ENCODE measurements at regions of chr1 and their contacts with region 1.

Region 1: DNA sequence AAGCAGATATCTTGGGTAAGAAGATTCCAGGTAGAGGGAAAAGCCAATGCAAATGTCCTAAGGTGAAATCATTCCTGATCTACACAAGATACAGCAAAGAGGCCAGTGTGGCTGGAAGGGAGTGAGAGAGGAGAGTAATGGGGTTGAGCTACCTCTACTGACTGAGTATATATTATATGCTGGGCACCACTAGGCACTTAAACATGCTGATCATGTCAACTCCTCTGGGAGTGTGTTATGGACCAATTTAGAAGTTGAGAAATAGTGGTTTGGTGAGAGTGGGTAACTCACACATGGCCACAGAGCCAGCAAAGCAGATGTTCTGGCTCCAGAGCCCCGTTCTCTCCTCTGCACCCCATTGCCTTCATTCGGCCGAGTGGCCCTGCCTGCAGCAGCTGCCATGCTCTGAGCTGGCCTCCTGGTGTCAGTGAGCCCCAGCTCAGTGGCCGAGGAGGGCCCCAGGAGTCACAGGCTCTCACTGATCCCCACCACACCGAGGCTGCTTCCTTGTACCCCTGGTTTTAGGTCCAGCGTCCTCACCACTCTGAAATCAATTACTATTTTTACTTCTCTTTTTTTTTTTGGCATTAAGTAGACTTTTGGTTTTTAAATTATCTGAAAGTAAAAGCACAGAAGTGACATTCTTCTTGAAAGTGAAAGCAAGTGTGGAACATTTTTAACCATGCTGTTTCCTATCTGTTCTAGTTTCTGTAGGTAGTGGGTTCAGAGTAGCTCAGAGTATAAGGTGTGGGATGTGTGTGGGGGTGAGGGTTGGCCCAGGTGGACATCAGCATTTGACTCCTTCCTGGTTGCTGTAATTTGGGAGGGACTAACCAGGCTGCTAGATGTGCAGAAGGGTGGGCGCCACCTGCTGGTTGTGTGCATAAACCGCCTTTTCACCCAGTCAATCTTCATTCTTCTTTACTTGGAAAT is 45.8 kb upstream of the CRNN start:
- DNase-seq: peak; percentile 48
- H3K4me3 ChIP-seq: no peak overlapping the region
- H3K27ac ChIP-seq: no peak overlapping the region
- H3K4me1 ChIP-seq: peaks cover 5% of the 10 kb centered on the region
- H3K27me3 ChIP-seq: no peaks in the 10 kb centered on the region
- CTCF ChIP-seq: peak; percentile 86 to 94

Region 2: GRCh38 chr1:151924679-151925587 is 534.9 kb before region 1 on chr1:
- CTCF ChIA-PET with region 1: no interaction called
- dilution Hi-C with region 1: no loop called
- in situ Hi-C with region 1: no loop called
- intact Hi-C with region 1: loop called (anchors 10 kb)
- DNase-seq: no peak
- H3K4me3 ChIP-seq: no peak overlapping the region
- H3K27ac ChIP-seq: no peak overlapping the region
- H3K4me1 ChIP-seq: peaks cover 9% of the 10 kb centered on the region
- H3K27me3 ChIP-seq: no peaks in the 10 kb centered on the region
- CTCF ChIP-seq: no peak

Region 3: GRCh38 chr1:152148981-152149380 is 310.9 kb before region 1 on chr1:
- CTCF ChIA-PET with region 1: no interaction called
- dilution Hi-C with region 1: loop called (anchors 5 kb)
- in situ Hi-C with region 1: no loop called
- intact Hi-C with region 1: no loop called
- DNase-seq: no peak
- H3K4me3 ChIP-seq: no peak overlapping the region
- H3K27ac ChIP-seq: no peak overlapping the region
- H3K4me1 ChIP-seq: no peaks in the 10 kb centered on the region
- H3K27me3 ChIP-seq: no peaks in the 10 kb centered on the region
- CTCF ChIP-seq: no peak

Region 4: DNA sequence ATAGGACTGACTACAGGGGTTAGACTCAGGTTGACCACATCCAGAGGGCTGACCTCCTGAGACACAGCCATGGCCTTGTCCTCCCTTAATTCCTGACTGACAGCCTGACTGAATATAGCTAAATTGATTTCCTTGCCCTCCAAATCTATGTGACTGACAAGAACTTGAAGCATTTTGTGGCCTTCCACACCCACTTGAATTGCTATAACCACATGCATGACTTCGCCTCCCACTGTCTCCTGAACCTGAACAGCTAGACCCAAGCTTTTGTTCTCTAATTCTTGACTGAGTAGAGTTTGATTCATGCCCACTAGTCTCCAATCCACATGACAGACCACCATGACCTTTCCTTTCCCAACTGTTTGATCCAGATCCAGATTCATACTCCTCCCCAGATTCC is 103.1 kb before region 1 on chr1:
- CTCF ChIA-PET with region 1: no interaction called
- dilution Hi-C with region 1: loop called (anchors 5 kb)
- in situ Hi-C with region 1: no loop called
- intact Hi-C with region 1: no loop called
- DNase-seq: no peak
- H3K4me3 ChIP-seq: no peak overlapping the region
- H3K27ac ChIP-seq: no peak overlapping the region
- H3K4me1 ChIP-seq: peaks cover 3% of the 10 kb centered on the region
- H3K27me3 ChIP-seq: peaks cover 2% of the 10 kb centered on the region
- CTCF ChIP-seq: no peak

Region 5: DNA sequence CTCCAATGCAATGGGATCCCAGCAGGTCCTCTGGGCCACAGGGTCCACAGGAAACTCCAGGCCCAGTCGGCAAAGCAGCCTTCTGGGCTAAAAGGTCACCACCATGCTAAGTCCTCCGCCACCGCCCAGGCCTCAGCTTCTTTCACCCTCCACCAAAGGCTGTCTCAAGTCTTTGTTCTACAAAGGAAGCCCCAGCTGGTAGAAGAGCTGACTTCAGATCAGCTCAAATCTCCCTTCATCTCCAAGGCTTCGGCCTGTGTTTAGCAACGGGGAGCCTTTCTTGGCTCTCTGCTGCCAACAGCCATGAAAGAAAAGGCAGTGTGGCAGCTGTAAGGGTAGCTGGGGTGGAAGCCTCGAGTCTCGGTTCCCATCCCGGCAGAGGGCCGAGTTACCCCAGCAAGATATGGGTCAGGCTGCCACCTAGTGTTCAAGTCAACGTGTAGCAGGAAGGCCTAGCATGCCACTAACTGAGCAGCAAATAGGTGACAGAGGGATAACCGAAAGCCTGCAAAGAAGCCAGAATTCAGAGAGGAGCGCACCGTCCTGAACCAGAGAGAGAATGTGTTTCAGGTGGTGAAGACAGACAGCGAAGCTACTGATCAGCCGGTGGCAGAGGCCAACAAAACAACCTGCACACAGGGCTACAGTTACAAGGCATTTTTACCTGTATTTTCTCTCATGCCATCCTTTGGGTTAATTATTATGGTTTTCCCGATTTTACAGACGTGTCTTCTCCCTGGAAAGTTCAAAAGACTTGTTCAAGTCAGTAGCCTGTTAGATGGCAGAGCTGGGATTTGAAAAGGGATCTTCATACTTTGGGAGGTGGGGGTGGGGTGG is 19.0 kb before region 1 on chr1:
- CTCF ChIA-PET with region 1: interaction called, 4 read pairs
- dilution Hi-C with region 1: no loop called
- in situ Hi-C with region 1: no loop called
- intact Hi-C with region 1: loop called (anchors 2 kb)
- DNase-seq: peak; percentile 68
- H3K4me3 ChIP-seq: no peak overlapping the region
- H3K27ac ChIP-seq: no peak overlapping the region
- H3K4me1 ChIP-seq: peaks cover 34% of the 10 kb centered on the region
- H3K27me3 ChIP-seq: no peaks in the 10 kb centered on the region
- CTCF ChIP-seq: peak; percentile 91 to 92